ENCODE measurements at regions of chr4 and their contacts with region 1.

Region 1: DNA sequence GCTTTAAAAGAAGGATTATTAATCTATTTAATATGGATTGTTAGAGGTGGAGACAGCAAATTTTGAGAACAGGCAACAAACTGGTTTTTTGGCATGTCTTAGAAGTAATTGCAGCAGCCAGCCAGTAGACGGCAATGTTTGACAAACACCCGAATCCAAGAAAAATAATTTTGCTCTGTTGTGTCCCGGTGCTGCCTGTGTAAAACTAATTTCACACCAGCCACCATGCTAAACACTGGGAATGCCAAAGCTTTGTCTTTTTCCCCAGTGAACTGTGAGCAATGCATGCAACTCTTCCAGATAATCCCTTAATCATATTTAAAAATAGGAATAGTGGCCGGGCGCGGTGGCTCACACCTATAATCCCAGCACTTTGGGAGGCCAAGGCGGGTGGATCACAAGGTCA is 25.9 kb downstream of the SMIM31 start:
- DNase-seq: peak; percentile 30
- ATAC-seq: peak; percentile 73
- H3K4me3 ChIP-seq: no peak overlapping the region
- H3K27ac ChIP-seq: no peak overlapping the region
- H3K4me1 ChIP-seq: no peaks in the 10 kb centered on the region
- H3K27me3 ChIP-seq: no peaks in the 10 kb centered on the region
- CTCF ChIP-seq: peak; percentile 91 to 94 (median 94)
- EP300 ChIP-seq: no peak
- POLR2A ChIP-seq: no peak
- RAD21 ChIP-seq: peak; percentile 90

Region 2: DNA sequence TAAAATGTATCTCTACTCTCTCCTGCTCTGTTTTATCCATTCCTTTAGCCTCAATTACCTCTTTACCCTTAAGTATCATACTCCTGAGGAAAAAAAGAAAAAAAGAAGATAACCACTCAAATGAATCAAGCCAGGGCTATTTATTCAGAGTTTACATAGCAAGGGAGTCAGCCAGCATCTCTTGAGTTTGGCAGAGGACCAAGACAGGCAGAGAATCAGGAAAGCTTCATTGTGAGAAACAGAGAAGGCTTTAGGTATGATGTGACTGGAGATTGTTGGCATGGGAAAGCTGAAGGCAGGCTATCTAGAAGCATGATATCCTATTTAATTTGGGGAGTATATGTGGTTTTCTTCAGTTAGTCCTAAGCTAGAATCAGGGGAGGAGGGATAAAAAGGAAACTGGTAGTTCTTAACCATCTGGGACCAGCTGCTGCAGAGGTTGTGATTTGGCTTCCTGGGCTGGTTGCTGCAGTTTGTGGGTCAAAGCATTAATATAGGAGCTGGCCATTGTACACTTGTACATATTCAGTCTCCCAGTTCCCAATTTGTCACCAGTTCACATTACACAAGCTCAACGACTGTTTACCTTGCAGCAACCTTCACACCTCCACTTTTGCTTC is 108.4 kb after region 1 on chr4:
- CTCF ChIA-PET with region 1: interaction called, 10 read pairs
- POLR2A ChIA-PET with region 1: no interaction called
- RAD21 ChIA-PET with region 1: interaction called, 4 read pairs
- SMC1A ChIA-PET with region 1: interaction called, 7 read pairs
- in situ Hi-C with region 1: no loop called
- intact Hi-C with region 1: loop called (anchors 1 kb)
- DNase-seq: no peak
- ATAC-seq: peak; percentile 31; the same call in 2 of the 3 replicates
- H3K4me3 ChIP-seq: no peak overlapping the region
- H3K27ac ChIP-seq: no peak overlapping the region
- H3K4me1 ChIP-seq: peaks cover 19% of the 10 kb centered on the region
- H3K27me3 ChIP-seq: no peaks in the 10 kb centered on the region
- CTCF ChIP-seq: no peak
- EP300 ChIP-seq: no peak
- POLR2A ChIP-seq: no peak
- RAD21 ChIP-seq: no peak

Region 3: GRCh38 chr4:164918956-164919355 is 139.1 kb after region 1 on chr4:
- CTCF ChIA-PET with region 1: interaction called, 25 read pairs
- POLR2A ChIA-PET with region 1: no interaction called
- RAD21 ChIA-PET with region 1: interaction called, 4 read pairs
- SMC1A ChIA-PET with region 1: interaction called, 5 read pairs
- in situ Hi-C with region 1: loop called (anchors 10 kb)
- intact Hi-C with region 1: no loop called
- DNase-seq: no peak
- ATAC-seq: no peak
- H3K4me3 ChIP-seq: no peak overlapping the region
- H3K27ac ChIP-seq: no peak overlapping the region
- H3K4me1 ChIP-seq: no peaks in the 10 kb centered on the region
- H3K27me3 ChIP-seq: no peaks in the 10 kb centered on the region
- CTCF ChIP-seq: no peak
- EP300 ChIP-seq: no peak
- POLR2A ChIP-seq: no peak
- RAD21 ChIP-seq: no peak

Region 4: DNA sequence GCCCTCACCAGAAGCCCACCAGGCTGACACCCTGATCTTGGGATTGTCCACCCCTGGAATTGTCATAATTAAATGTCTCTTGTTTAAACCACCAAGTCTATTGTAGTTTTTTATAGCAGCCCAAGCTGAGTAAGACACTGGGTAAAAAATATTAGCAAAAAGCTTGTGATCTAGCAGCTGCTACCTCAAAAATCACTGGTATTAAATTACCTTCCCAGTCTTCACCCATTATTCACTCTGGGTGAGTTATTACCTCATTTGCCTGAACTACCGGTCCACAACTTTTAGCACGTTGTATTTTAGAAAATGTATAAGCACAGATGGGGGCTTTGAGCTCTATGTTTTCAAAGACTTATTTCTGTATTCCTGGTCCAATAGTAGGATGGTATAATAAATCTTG is 209.7 kb after region 1 on chr4:
- CTCF ChIA-PET with region 1: no interaction called
- POLR2A ChIA-PET with region 1: no interaction called
- RAD21 ChIA-PET with region 1: no interaction called
- SMC1A ChIA-PET with region 1: no interaction called
- in situ Hi-C with region 1: loop called (anchors 10 kb)
- intact Hi-C with region 1: no loop called
- DNase-seq: no peak
- ATAC-seq: no peak
- H3K4me3 ChIP-seq: no peak overlapping the region
- H3K27ac ChIP-seq: no peak overlapping the region
- H3K4me1 ChIP-seq: no peaks in the 10 kb centered on the region
- H3K27me3 ChIP-seq: no peaks in the 10 kb centered on the region
- CTCF ChIP-seq: no peak
- EP300 ChIP-seq: no peak
- POLR2A ChIP-seq: no peak
- RAD21 ChIP-seq: no peak

Region 5: GRCh38 chr4:165096776-165097175 is 317.0 kb after region 1 on chr4:
- CTCF ChIA-PET with region 1: interaction called, 15 read pairs
- POLR2A ChIA-PET with region 1: no interaction called
- RAD21 ChIA-PET with region 1: interaction called, 8 read pairs
- SMC1A ChIA-PET with region 1: interaction called, 3 read pairs
- in situ Hi-C with region 1: loop called (anchors 5 kb)
- intact Hi-C with region 1: loop called (anchors 2 kb)
- DNase-seq: no peak
- ATAC-seq: peak; percentile 33; the same call in 2 of the 3 replicates
- H3K4me3 ChIP-seq: no peak overlapping the region
- H3K27ac ChIP-seq: no peak overlapping the region
- H3K4me1 ChIP-seq: no peaks in the 10 kb centered on the region
- H3K27me3 ChIP-seq: no peaks in the 10 kb centered on the region
- CTCF ChIP-seq: peak in 2 of 3 experiments; percentile 48 to 54; a peak in 5 of 6 replicates
- EP300 ChIP-seq: no peak
- POLR2A ChIP-seq: no peak
- RAD21 ChIP-seq: peak; percentile 42